CD4-positive, alpha-beta memory T cell (primary cell): ENCODE measurements at regions of chr5 and their contacts with region 1.

Region 1: DNA sequence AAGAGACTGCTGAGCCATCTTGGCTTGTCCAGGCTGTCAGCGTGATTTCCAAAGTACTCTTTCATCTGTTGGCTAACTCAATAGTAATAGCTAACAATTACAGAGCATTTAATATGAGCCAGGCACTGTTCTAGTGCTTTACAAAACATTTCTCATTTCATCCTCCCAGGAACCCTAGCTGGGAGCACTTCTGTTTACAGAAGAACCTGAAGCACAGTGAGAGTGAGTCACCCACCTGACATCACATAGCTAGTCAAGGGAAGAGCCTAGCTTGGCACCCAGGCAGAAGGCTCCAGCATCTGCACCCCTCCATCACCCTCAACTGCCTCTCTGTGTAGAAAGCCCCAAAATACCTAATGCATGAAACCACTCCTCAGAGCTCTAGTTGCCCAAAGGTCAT is 57.5 kb upstream of the IQGAP2 start:
- DNase-seq: no peak
- H3K4me3 ChIP-seq: no peak overlapping the region
- H3K4me3 Mint-ChIP-seq: no peak overlapping the region
- H3K27ac ChIP-seq: no peak overlapping the region
- H3K27ac Mint-ChIP-seq: no peak overlapping the region
- H3K4me1 ChIP-seq: peaks cover 14% of the 10 kb centered on the region
- H3K4me1 Mint-ChIP-seq: peaks cover 10 to 21% (median 11%) of the 10 kb centered on the region in 4 donors
- H3K27me3 ChIP-seq: no peaks in the 10 kb centered on the region
- H3K27me3 Mint-ChIP-seq: no peaks in the 10 kb centered on the region

Region 2: DNA sequence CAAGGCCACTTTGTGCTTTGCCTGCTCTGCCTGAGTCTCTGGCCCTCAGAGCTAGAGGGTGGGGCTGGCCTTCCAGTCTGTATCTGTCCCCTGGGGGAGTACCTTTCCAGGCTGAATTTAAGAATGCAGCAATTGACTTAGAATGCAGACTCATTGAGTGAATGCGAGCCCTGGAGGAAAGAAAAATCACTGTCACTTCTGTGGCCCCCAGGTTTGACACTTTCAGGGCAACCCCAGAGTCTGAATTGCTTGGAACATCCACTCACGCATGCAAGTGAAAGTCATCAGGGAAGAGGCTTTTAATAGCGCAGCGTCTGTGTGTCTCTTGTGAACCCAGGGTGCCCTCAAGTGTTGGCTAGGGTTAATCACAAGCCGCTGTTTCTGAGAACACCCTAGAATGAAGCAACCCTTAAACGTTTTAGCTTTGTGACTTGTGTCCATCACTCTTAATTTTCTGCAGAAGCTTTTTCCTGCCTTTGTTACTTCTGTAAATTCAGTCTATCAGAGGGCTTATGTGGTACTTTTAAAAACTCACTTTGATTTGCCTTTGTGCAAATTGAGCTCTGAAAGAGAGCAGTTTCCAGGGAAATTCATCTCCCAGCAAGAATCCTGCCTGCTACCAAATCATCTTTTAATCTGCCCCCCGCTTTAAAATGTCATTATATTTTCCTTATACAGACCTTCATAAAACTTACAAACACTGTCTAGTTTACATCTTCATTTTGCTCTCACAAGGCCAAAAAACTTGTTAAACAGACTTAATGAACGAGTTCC is 89.3 kb before region 1 on chr5:
- CTCF ChIA-PET with region 1: no interaction called
- POLR2A ChIA-PET with region 1: no interaction called
- intact Hi-C with region 1: no loop called
- DNase-seq: peak; percentile 55 to 70 (median 64)
- H3K4me3 ChIP-seq: no peak overlapping the region
- H3K4me3 Mint-ChIP-seq: peak overlapping the region in 4 of 8 donors; percentile 17 to 70 (median 36)
- H3K27ac ChIP-seq: no peak overlapping the region
- H3K27ac Mint-ChIP-seq: peak overlapping the region in 1 of 7 donors; percentile 14
- H3K4me1 ChIP-seq: peaks cover 4% of the 10 kb centered on the region
- H3K4me1 Mint-ChIP-seq: peaks cover 6 to 9% (median 7%) of the 10 kb centered on the region in 4 donors
- H3K27me3 ChIP-seq: no peaks in the 10 kb centered on the region
- H3K27me3 Mint-ChIP-seq: peaks cover 0 to 6% of the 10 kb centered on the region in 2 donors

Region 3: DNA sequence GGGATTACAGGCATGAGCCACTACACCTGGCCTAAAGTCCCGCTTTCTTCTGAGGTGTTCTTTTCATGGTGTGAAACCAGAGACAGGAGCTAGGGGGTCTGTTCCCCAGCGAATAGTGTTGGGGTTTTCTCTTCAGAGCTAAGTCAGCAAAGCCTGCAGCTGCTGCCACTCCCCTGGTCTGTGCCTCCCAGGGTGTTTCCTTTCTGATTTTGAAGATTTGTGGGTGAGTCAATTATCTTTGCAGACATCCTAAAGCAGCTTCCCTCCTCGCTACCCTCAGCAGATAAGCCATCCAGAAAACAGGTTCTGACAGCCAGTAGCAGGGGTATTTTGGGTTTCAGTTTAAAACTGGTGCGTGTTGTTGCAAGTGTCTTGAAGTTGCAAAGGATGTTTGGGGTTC is 14.5 kb before region 1 on chr5:
- CTCF ChIA-PET with region 1: interaction called, 12 read pairs
- POLR2A ChIA-PET with region 1: interaction called, 10 read pairs
- intact Hi-C with region 1: no loop called
- DNase-seq: peak; percentile 40 to 67 (median 50)
- H3K4me3 ChIP-seq: no peak overlapping the region
- H3K4me3 Mint-ChIP-seq: peak overlapping the region; percentile 13 to 86 (median 76)
- H3K27ac ChIP-seq: peak overlapping the region; percentile 49
- H3K27ac Mint-ChIP-seq: peak overlapping the region; percentile 87 to 96 (median 93)
- H3K4me1 ChIP-seq: peaks cover 74% of the 10 kb centered on the region
- H3K4me1 Mint-ChIP-seq: peaks cover 62 to 81% (median 71%) of the 10 kb centered on the region in 4 donors
- H3K27me3 ChIP-seq: no peaks in the 10 kb centered on the region
- H3K27me3 Mint-ChIP-seq: no peaks in the 10 kb centered on the region